Caco-2 (cell line): ENCODE measurements at regions of chr12 and their contacts with region 1.

Region 1: DNA sequence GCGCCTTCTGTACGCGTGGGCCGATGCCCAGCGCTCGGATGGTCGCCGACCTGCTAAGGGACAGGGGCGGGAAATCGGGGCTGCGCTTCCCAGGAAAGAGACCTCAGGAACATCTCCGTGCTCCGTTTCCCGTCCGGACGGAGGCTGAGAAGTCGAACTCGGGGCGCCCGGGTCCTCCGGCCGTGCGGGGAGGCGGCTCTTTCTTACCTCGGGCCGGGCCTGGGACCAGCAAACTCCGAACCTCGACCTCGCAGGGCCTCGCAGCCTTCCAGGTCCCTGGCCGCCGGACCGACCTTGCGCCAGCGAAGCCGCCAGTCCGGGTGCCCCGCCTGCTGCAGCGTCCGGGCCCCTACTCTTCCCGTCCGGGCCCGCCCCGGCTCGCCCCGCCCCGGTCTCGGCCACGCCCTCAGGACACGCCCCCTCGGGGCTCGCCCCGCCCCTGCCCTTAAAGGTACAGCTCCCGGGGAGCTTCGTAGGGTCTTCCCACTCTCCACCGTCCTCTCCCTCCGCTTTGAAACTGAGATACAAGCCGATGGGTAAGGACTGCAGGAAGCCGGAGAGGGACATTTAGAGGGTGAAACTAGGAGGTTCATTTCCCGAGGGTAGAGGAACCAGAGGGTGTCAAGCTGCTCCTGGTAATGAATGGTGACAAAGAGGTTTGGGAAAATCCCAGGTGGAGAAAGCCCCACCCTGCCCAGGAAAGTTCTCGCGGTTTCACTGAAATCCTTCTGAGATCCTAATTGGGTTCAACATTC is at the start of gene SLC8B1:
- DNase-seq: peak; percentile 85 to 92
- H3K4me3 ChIP-seq: peak within 1 kb of the TSS; percentile 49
- H3K4me3 Mint-ChIP-seq: peak within 1 kb of the TSS; percentile 77
- H3K27ac Mint-ChIP-seq: peak within 1 kb of the TSS; percentile 72
- H3K4me1 ChIP-seq: peaks cover 5% of the 10 kb centered on the region; the same call in 1 of the 2 replicates
- H3K4me1 Mint-ChIP-seq: no peaks in the 10 kb centered on the region
- H3K27me3 ChIP-seq: no peaks in the 10 kb centered on the region
- H3K27me3 Mint-ChIP-seq: no peaks in the 10 kb centered on the region
- CTCF ChIP-seq: no peak
- total RNA-seq, gene SLC8B1: 13.0 and 13.9 TPM in 2 replicates

Region 2: DNA sequence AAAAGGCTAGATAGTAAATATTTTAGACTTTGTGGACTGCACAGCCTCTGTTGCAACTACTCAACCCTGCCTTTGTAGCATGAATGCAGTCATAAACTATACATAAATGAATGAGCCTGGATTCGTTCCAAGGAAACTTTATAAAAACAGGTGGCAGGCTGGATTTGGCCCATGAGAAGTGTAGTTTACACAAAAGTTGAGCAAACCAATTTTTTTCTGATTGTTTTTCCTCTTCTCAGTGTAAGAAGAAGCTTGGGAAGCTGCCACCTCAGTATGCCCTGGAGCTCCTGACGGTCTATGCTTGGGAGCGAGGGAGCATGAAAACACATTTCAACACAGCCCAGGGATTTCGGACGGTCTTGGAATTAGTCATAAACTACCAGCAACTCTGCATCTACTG is 418.7 kb before region 1 on chr12:
- CTCF ChIA-PET with region 1: no interaction called
- POLR2A ChIA-PET with region 1: interaction called, 15 read pairs
- intact Hi-C with region 1: no loop called
- DNase-seq: no peak
- H3K4me3 ChIP-seq: no peak overlapping the region
- H3K4me3 Mint-ChIP-seq: no peak overlapping the region
- H3K27ac Mint-ChIP-seq: no peak overlapping the region
- H3K4me1 ChIP-seq: no peaks in the 10 kb centered on the region
- H3K4me1 Mint-ChIP-seq: no peaks in the 10 kb centered on the region
- H3K27me3 ChIP-seq: no peaks in the 10 kb centered on the region
- H3K27me3 Mint-ChIP-seq: no peaks in the 10 kb centered on the region
- CTCF ChIP-seq: no peak

Region 3: GRCh38 chr12:113221181-113221997 is 113.6 kb before region 1 on chr12 and contains the start of gene TPCN1:
- CTCF ChIA-PET with region 1: interaction called, 5 read pairs
- POLR2A ChIA-PET with region 1: interaction called, 12 read pairs
- intact Hi-C with region 1: no loop called
- DNase-seq: peak; percentile 99
- H3K4me3 ChIP-seq: peak within 1 kb of the TSS; percentile 73
- H3K4me3 Mint-ChIP-seq: peak within 1 kb of the TSS; percentile 79
- H3K27ac Mint-ChIP-seq: peak within 1 kb of the TSS; percentile 83
- H3K4me1 ChIP-seq: peaks cover 16% of the 10 kb centered on the region; the same call in 1 of the 2 replicates
- H3K4me1 Mint-ChIP-seq: no peaks in the 10 kb centered on the region
- H3K27me3 ChIP-seq: no peaks in the 10 kb centered on the region
- H3K27me3 Mint-ChIP-seq: no peaks in the 10 kb centered on the region
- CTCF ChIP-seq: no peak
- total RNA-seq, gene TPCN1: 54.4 and 55.9 TPM in 2 replicates

Region 4: DNA sequence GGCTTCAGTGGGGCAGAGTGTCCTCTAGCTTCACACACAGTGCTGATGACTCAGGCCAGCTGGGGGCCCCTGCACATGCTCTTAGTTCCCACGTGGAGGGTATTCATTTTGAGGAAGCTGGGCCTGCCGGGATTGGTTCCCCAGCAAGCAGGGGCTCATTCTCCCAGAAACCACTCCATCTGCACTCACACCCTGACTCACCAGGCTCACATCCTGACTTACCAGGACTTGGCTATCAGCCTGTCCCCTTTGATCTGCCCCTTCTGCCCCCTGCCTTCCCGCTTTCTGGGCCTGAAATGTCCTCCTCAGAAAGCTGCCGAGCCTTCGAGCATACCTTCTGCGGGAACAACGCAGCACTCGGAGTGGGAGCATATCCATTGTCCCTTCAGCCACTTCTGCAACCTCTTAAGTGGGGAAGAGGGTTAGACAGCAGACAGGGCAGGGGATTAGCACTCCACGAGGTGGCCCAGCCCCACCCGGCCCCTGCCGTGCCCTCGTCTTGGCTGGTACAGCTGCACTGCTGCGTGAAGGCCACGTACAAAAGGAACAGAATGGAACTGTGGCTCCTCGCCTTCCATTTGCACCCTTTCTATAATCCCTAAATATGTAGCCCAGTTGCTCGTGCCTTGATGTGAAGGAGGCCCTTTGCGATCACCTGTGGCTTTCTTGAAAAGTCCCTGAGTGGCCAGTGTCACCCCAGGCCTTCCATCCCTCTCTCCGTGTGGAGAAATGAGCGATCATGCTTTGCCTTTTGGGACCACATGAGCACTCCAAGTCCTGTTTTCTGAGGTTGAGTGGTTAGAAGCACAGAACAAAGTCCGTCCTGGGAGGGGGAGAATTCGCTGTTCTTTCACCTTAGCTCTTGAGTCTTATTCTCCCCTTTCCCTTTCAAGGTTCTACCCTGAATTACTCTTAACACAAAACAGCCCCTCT is 87.6 kb before region 1 on chr12:
- CTCF ChIA-PET with region 1: no interaction called
- POLR2A ChIA-PET with region 1: interaction called, 10 read pairs
- intact Hi-C with region 1: no loop called
- DNase-seq: no peak
- H3K4me3 ChIP-seq: no peak overlapping the region
- H3K4me3 Mint-ChIP-seq: no peak overlapping the region
- H3K27ac Mint-ChIP-seq: peak overlapping the region; percentile 99
- H3K4me1 ChIP-seq: peaks cover 30% of the 10 kb centered on the region
- H3K4me1 Mint-ChIP-seq: peaks cover 49% of the 10 kb centered on the region
- H3K27me3 ChIP-seq: no peaks in the 10 kb centered on the region
- H3K27me3 Mint-ChIP-seq: no peaks in the 10 kb centered on the region
- CTCF ChIP-seq: no peak

Region 5: DNA sequence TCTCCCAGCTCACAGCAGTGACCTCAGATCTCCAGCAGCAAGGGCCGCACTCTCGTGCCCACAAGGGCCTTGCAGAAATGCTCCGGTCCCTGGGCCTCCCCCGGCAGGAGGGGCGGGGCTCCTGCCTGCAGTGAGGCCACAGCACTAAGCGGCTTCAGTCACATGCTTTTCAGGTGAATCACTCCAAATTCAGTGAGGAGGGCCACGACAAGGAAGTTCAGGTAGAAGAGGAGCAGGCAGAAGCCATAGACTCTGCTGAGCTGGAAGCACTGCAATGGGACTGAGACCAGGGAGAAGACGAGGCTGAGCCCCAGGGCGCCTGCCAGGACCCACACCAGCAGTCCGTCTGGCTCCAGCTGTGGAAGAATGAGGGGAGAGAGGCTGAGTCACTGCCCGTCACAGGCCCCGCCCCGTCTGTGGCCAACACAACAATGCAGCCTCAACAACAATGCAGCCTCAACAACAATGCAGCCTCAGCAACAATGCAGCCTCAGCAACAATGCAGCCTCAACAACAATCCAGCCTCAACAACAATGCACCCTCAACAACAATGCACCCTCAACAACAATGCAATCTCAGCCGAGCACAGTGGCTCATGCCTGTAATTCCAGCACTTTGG is 35.2 kb before region 1 on chr12:
- CTCF ChIA-PET with region 1: no interaction called
- POLR2A ChIA-PET with region 1: no interaction called
- intact Hi-C with region 1: loop called (anchors 1 kb)
- DNase-seq: peak; percentile 84 to 89
- H3K4me3 ChIP-seq: no peak overlapping the region
- H3K4me3 Mint-ChIP-seq: peak overlapping the region; percentile 37
- H3K27ac Mint-ChIP-seq: peak overlapping the region; percentile 97
- H3K4me1 ChIP-seq: peaks cover 21% of the 10 kb centered on the region
- H3K4me1 Mint-ChIP-seq: peaks cover 8% of the 10 kb centered on the region
- H3K27me3 ChIP-seq: no peaks in the 10 kb centered on the region
- H3K27me3 Mint-ChIP-seq: no peaks in the 10 kb centered on the region
- CTCF ChIP-seq: no peak

Region 6: GRCh38 chr12:113358381-113359132 is 23.6 kb after region 1 on chr12 and contains the start of gene PLBD2:
- CTCF ChIA-PET with region 1: no interaction called
- POLR2A ChIA-PET with region 1: no interaction called
- intact Hi-C with region 1: loop called (anchors 1 kb)
- DNase-seq: peak; percentile 94 to 95
- H3K4me3 ChIP-seq: peak within 1 kb of the TSS; percentile 76
- H3K4me3 Mint-ChIP-seq: peak within 1 kb of the TSS; percentile 78
- H3K27ac Mint-ChIP-seq: peak within 1 kb of the TSS; percentile 14
- H3K4me1 ChIP-seq: peaks cover 10% of the 10 kb centered on the region
- H3K4me1 Mint-ChIP-seq: peaks cover 13% of the 10 kb centered on the region
- H3K27me3 ChIP-seq: no peaks in the 10 kb centered on the region
- H3K27me3 Mint-ChIP-seq: no peaks in the 10 kb centered on the region
- CTCF ChIP-seq: no peak
- total RNA-seq, gene PLBD2: 41.1 and 43.1 TPM in 2 replicates

Region 7: GRCh38 chr12:113462117-113462774 is 127.3 kb after region 1 on chr12:
- CTCF ChIA-PET with region 1: no interaction called
- POLR2A ChIA-PET with region 1: interaction called, 14 read pairs
- intact Hi-C with region 1: no loop called
- DNase-seq: peak; percentile 74 to 82
- H3K4me3 ChIP-seq: no peak overlapping the region
- H3K4me3 Mint-ChIP-seq: no peak overlapping the region
- H3K27ac Mint-ChIP-seq: no peak overlapping the region
- H3K4me1 ChIP-seq: peaks cover 11% of the 10 kb centered on the region; the same call in 1 of the 2 replicates
- H3K4me1 Mint-ChIP-seq: peaks cover 9% of the 10 kb centered on the region
- H3K27me3 ChIP-seq: peaks cover 3% of the 10 kb centered on the region
- H3K27me3 Mint-ChIP-seq: peaks cover 33% of the 10 kb centered on the region
- CTCF ChIP-seq: peak; percentile 77 to 84

Region 8: DNA sequence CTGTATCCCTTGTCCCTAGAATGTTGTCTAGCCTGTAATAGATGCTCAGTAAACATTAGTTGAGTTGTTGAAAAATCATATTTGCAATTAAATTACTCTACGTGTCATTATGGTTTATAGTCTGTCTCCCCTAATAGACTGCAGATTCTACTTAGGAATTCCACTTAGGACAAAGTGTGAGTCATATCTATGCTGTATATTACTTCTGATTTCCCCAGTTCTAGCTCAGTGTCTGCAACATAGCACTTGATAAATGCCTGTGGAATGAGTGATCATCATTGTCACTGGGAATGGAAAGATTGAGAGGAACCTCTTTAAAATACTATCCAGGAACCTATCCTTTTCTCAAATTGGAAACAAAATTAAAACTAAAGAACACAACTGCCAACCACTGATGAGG is 971.7 kb after region 1 on chr12:
- CTCF ChIA-PET with region 1: no interaction called
- POLR2A ChIA-PET with region 1: no interaction called
- intact Hi-C with region 1: no loop called
- DNase-seq: no peak
- H3K4me3 ChIP-seq: no peak overlapping the region
- H3K4me3 Mint-ChIP-seq: no peak overlapping the region
- H3K27ac Mint-ChIP-seq: no peak overlapping the region
- H3K4me1 ChIP-seq: no peaks in the 10 kb centered on the region
- H3K4me1 Mint-ChIP-seq: no peaks in the 10 kb centered on the region
- H3K27me3 ChIP-seq: no peaks in the 10 kb centered on the region
- H3K27me3 Mint-ChIP-seq: peaks cover 16% of the 10 kb centered on the region
- CTCF ChIP-seq: no peak